Ovary (tissue), 10 donors: ENCODE measurements at regions of chr3 and their contacts with region 1.

Region 1: DNA sequence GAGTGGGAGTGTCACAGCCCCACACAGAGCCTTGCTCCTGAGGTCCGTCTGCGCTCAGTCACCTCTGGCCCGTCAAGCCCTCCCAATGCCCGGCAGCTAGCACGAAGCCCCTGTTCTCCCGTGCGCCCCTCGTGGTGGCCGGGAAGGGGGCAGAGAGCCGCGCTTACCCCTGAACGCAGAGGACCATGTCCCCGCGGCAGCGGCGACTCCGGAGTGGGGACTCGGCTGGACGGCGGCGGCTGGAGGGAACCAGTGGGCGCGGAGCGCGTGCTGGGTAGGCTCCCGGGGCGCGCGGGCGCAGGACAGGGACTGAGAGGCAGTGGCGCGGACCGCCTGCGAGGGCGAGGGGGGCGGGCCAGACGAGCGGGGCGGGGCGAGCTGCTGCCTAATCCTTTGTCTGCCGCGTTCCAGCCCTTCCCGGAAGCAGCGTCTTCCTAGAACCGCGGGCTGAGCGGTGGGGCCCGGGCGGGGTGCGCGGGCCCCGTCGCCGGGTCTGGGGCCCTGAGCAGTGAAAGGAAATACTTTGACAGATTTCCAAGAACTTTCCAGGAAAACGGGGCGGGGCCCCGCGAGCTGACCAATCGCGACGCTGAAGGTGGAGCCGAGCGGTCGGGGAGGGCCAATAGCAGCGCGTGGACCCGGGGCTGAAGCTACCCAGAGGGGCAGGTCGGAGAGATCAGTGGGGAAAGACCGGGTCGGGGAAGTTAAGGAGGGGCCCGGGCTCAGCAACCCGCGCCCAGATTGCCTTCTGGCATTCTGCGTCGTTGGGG is at the start of gene CISH:
- DNase-seq: peak; percentile 96 to 97 (median 96)
- H3K4me3 ChIP-seq: peak within 1 kb of the TSS; percentile 89
- H3K27ac ChIP-seq: peak within 1 kb of the TSS; percentile 55 to 86
- H3K4me1 ChIP-seq: peaks cover 30% of the 10 kb centered on the region
- H3K27me3 ChIP-seq: no peaks in the 10 kb centered on the region
- CTCF ChIP-seq: peak in 2 of 3 donors; percentile 53 to 77
- EP300 ChIP-seq: peak; percentile 75
- POLR2A ChIP-seq: peak; percentile 71
- total RNA-seq, gene CISH: 6.2 to 28.0 (median 24.7) TPM

Region 2: DNA sequence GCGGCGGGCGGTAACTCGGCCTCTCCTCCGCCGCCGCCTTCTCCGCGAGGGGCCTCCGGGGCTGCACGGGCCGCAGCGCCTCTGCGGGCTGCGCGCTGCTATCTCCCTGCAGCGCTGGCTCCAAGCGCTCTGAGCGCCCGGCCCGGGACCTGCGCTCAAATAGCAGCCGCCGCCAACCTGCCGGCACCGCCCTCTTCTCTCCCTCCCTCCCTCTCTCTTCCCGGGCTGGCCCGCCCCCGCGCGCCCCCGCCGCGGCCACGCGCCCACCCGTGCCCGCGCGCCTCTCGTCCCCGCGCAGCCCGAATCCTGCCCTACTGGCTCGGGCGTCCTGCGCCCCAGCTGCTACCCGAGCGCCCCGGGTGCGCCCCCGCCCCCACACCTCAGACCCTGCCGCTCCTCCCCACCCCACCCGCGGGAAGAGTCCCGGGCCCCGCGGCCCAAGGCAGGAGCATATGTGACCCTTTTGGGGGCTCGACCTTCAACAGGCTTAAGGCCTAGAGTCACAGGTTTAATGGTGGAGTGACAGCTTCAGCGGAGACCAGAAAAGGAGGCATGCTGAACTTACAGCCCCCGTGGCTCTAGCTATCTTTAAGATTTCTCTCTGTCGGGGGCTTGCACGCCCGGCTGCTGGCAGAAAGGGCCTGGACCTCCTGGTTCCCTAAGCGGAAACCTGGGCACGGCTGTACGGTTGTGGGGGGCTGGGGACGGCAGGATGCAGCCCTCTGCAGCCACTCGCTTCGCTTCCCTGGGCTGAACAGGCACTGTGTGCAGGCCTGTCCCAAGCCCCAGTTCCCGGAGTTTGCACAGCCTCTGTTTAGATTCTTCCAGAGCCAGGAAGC is 107.9 kb before region 1 on chr3 and contains the start of gene CACNA2D2:
- intact Hi-C with region 1: loop called in 1 of 4 experiments (anchors 10 kb)
- DNase-seq: peak; percentile 73 to 87 (median 83)
- H3K4me3 ChIP-seq: peak within 1 kb of the TSS; percentile 45
- H3K27ac ChIP-seq: peak within 1 kb of the TSS; percentile 25 to 72
- H3K4me1 ChIP-seq: peaks cover 5% of the 10 kb centered on the region
- H3K27me3 ChIP-seq: no peaks in the 10 kb centered on the region
- CTCF ChIP-seq: no peak
- EP300 ChIP-seq: no peak
- POLR2A ChIP-seq: peak; percentile 23
- total RNA-seq, gene CACNA2D2: 0.95 to 8.6 (median 4.2) TPM

Region 3: GRCh38 chr3:50572158-50572557 is 39.5 kb before region 1 on chr3:
- intact Hi-C with region 1: loop called (anchors 1 to 2 kb)
- DNase-seq: peak; percentile 65 to 84 (median 79)
- H3K4me3 ChIP-seq: no peak overlapping the region
- H3K27ac ChIP-seq: peak overlapping the region in 1 of 2 donors; percentile 4
- H3K4me1 ChIP-seq: peaks cover 8% of the 10 kb centered on the region
- H3K27me3 ChIP-seq: no peaks in the 10 kb centered on the region
- CTCF ChIP-seq: peak; percentile 69 to 95 (median 89)
- EP300 ChIP-seq: no peak
- POLR2A ChIP-seq: no peak

Region 4: GRCh38 chr3:51384726-51385473 is 773.3 kb after region 1 on chr3 and contains the start of gene MANF:
- intact Hi-C with region 1: loop called (anchors 5 to 10 kb)
- DNase-seq: peak; percentile 95 to 97 (median 96)
- H3K4me3 ChIP-seq: peak within 1 kb of the TSS; percentile 83
- H3K27ac ChIP-seq: peak within 1 kb of the TSS; percentile 81 to 90
- H3K4me1 ChIP-seq: peaks cover 1% of the 10 kb centered on the region
- H3K27me3 ChIP-seq: no peaks in the 10 kb centered on the region
- CTCF ChIP-seq: peak in 2 of 3 donors; percentile 18 to 30
- EP300 ChIP-seq: no peak
- POLR2A ChIP-seq: peak; percentile 73
- total RNA-seq, gene MANF: 18.4 to 75.5 (median 43.4) TPM

Region 5: DNA sequence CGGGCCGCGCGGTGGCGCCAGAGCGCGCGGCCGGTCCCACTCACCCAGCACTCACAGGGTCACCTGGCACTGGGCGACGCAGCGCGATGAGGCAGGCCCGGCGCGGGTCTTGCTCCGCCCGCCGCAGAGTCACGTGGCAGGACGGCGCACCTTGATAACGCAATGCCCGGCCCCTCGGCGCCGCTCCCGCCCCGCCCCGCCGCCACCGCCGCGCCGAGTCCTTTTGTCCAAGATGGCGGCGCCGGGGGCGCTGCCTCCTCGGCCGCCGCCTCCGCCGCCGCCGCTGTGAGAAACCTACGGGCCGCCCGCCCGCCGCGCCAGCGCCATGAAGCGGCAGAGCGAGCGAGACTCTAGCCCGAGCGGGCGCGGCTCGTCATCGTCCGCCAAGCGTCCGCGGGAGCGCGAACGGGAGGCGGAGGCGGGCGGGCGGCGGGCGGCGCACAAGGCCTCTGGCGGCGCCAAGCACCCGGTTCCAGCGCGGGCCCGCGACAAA is 779.5 kb after region 1 on chr3 and contains the start of gene RBM15B:
- intact Hi-C with region 1: loop called (anchors 5 to 10 kb)
- DNase-seq: peak; percentile 97 to 98 (median 98)
- H3K4me3 ChIP-seq: peak within 1 kb of the TSS; percentile 77
- H3K27ac ChIP-seq: peak within 1 kb of the TSS; percentile 81 to 88
- H3K4me1 ChIP-seq: peaks cover 15% of the 10 kb centered on the region
- H3K27me3 ChIP-seq: no peaks in the 10 kb centered on the region
- CTCF ChIP-seq: peak in 2 of 3 donors; percentile 87 to 93
- EP300 ChIP-seq: no peak
- POLR2A ChIP-seq: peak; percentile 50
- total RNA-seq, gene RBM15B: 21.3 to 40.2 (median 30.0) TPM

Region 6: DNA sequence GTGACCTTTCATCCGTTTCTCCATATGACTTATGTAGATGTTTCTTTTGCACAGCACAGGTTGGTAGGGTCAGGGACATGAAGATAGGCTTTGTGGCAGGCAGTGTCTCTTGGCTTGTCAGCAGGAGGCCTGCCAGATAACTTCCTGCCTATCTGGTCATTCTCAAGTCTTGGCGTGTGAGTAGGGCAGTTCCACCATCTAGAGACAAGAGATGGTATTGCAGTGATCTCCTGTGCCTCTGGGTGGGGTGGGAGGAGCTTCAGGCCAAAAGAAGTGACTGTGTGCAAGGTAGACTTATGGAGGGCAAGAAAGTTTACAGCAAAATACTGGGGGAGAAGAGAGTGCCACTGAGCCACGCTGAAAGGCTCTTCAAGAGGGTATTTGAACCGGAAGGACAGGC is 1070.4 kb after region 1 on chr3:
- intact Hi-C with region 1: loop called in 1 of 4 experiments (anchors 5 kb)
- DNase-seq: peak; percentile 50 to 72 (median 64)
- H3K4me3 ChIP-seq: no peak overlapping the region
- H3K27ac ChIP-seq: no peak overlapping the region
- H3K4me1 ChIP-seq: no peaks in the 10 kb centered on the region
- H3K27me3 ChIP-seq: no peaks in the 10 kb centered on the region
- CTCF ChIP-seq: peak; percentile 24 to 86 (median 72)
- EP300 ChIP-seq: no peak
- POLR2A ChIP-seq: no peak

Region 7: GRCh38 chr3:51941798-51942602 is 1330.4 kb after region 1 on chr3 and contains the starts of genes PARP3 and RRP9:
- intact Hi-C with region 1: loop called in 1 of 4 experiments (anchors 10 kb)
- DNase-seq: peak; percentile 99 to 100 (median 100)
- H3K4me3 ChIP-seq: peak within 1 kb of the TSS; percentile 87
- H3K27ac ChIP-seq: peak within 1 kb of the TSS; percentile 77 to 90
- H3K4me1 ChIP-seq: peaks cover 14% of the 10 kb centered on the region
- H3K27me3 ChIP-seq: no peaks in the 10 kb centered on the region
- CTCF ChIP-seq: peak; percentile 99 to 100 (median 100)
- EP300 ChIP-seq: no peak
- POLR2A ChIP-seq: peak; percentile 33
- total RNA-seq, gene PARP3: 8.2 to 19.4 (median 11.6) TPM
- total RNA-seq, gene RRP9: 9.1 to 32.7 (median 19.3) TPM